Esophagus muscularis mucosa (tissue), 4 donors: ENCODE measurements at regions of chr14 and their contacts with region 1.

Region 1: GRCh38 chr14:49786315-49787110 is 18.6 kb downstream of the KLHDC2 start:
- DNase-seq: no peak
- H3K4me3 ChIP-seq: no peak overlapping the region
- H3K27ac ChIP-seq: no peak overlapping the region
- H3K4me1 ChIP-seq: peaks cover 0 to 4% (median 2%) of the 10 kb centered on the region in 4 donors
- H3K27me3 ChIP-seq: no peaks in the 10 kb centered on the region
- CTCF ChIP-seq: no peak
- EP300 ChIP-seq: no peak
- POLR2A ChIP-seq: no peak

Region 2: GRCh38 chr14:49732896-49733295 is 53.6 kb before region 1 on chr14:
- intact Hi-C with region 1: no loop called
- DNase-seq: no peak
- H3K4me3 ChIP-seq: no peak overlapping the region
- H3K27ac ChIP-seq: no peak overlapping the region
- H3K4me1 ChIP-seq: no peaks in the 10 kb centered on the region
- H3K27me3 ChIP-seq: no peaks in the 10 kb centered on the region
- CTCF ChIP-seq: no peak
- EP300 ChIP-seq: no peak
- POLR2A ChIP-seq: no peak

Region 3: GRCh38 chr14:49828640-49829039 is 42.1 kb after region 1 on chr14:
- intact Hi-C with region 1: loop called (anchors 10 kb)
- DNase-seq: no peak
- H3K4me3 ChIP-seq: no peak overlapping the region
- H3K27ac ChIP-seq: no peak overlapping the region
- H3K4me1 ChIP-seq: no peaks in the 10 kb centered on the region
- H3K27me3 ChIP-seq: no peaks in the 10 kb centered on the region
- CTCF ChIP-seq: no peak
- EP300 ChIP-seq: no peak
- POLR2A ChIP-seq: no peak

Region 4: DNA sequence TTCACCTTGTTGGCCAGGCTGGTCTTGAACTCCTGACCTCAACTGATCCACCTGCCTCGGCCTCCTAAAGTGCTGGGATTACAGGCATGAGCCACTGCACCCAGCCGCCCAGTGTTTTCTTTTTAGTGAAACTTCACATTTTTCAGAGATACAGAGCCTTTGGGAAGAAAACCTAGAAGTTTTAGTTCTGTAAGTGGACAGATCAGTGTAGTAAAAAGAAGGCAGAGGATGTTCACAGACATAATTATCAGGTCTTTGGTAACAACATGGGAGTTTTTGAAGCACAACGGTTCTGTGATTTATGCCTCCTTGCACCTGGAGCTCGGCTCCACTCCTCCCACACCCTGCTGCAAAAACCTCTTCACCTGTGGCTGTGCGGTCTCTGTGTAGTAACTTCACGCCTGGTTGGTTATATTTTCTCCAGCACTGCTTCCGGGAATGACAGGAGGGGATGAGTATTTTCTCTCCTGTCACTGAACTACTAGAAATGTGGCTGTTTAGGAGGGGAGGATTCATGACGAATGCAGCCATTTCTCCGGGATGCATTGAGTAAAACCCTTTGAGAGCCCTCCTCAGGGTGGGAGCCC is 173.4 kb after region 1 on chr14:
- intact Hi-C with region 1: no loop called
- DNase-seq: no peak
- H3K4me3 ChIP-seq: no peak overlapping the region
- H3K27ac ChIP-seq: no peak overlapping the region
- H3K4me1 ChIP-seq: no peaks in the 10 kb centered on the region
- H3K27me3 ChIP-seq: no peaks in the 10 kb centered on the region
- CTCF ChIP-seq: no peak
- EP300 ChIP-seq: no peak
- POLR2A ChIP-seq: no peak

Region 5: DNA sequence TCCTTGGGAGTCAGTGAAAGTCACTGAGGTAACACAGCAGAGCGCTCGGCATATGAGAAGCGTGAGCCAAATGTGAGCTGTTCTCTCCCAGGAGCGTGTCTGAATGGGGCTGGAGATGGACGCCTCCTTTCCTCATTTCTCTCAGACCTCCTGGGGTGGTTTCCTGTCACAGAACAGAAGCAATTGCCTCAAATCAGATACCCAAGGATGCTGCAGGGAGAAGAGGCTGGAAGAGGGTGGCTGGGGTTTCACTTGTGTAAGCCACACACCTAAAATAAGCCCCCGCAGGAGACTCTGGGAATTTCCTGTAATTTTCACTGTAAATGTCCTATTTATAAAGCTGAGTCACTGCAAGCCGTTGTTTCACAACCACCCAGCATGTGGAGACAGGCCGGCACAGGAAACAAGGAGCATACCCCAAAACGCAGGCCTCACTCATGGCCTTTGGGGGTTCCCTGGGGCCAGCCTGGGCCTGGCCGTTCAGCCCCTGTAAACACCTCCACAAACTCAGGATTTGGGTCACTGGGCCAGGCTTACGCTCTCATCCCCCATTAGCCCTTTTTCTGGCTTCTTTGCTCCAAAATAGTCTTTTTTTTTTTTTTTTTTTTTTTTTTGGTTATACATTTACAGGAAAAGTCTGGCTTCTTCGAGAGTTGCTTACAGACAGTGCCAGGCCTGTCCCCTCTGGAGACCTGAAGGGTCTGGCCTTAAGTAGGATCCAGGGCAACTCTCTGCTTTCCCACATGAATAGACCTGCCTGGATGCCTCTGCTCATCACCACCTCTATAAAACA is 274.6 kb after region 1 on chr14:
- intact Hi-C with region 1: no loop called
- DNase-seq: no peak
- H3K4me3 ChIP-seq: peak overlapping the region in 1 of 4 donors; percentile 20
- H3K27ac ChIP-seq: peak overlapping the region; percentile 67 to 75 (median 69)
- H3K4me1 ChIP-seq: peaks cover 22 to 28% (median 26%) of the 10 kb centered on the region in 4 donors
- H3K27me3 ChIP-seq: peaks cover 0 to under 1% (median 0%) of the 10 kb centered on the region in 4 donors
- CTCF ChIP-seq: peak in 1 of 3 experiments; percentile 17
- EP300 ChIP-seq: no peak
- POLR2A ChIP-seq: no peak